ENCODE measurements at regions of chr9 and their contacts with region 1.

Region 1: DNA sequence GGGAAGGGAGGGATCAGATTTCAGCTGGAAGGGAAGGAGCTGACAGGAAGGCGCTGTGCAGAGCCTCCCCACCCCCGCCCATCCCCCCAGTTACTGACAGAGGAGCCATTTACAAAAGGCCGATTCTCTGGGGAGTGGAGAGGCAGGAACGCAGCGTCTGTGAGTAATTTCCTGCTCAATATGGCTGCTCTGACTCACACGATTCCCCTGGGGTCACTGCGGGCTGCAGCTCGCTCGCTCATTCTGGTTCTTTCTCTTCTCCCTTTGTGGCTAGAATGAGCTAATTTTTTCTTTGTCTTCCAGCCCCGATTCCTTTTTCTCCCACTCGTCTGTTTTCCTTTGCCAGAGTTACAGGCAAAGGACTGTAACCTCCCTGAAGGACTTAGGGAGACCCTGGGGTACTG is 28.8 kb downstream of the PTPA start:
- DNase-seq: peak; percentile 95
- ATAC-seq: peak; percentile 83
- H3K4me3 ChIP-seq: peak overlapping the region; percentile 43 to 64 (median 57)
- H3K4me3 Mint-ChIP-seq: peak overlapping the region; percentile 90
- H3K27ac ChIP-seq: peak overlapping the region; percentile 97 to 100
- H3K27ac Mint-ChIP-seq: peak overlapping the region; percentile 94
- H3K4me1 ChIP-seq: peaks cover 43 to 50% of the 10 kb centered on the region in 2 donors
- H3K4me1 Mint-ChIP-seq: peaks cover 47% of the 10 kb centered on the region
- H3K27me3 ChIP-seq: no peaks in the 10 kb centered on the region
- H3K27me3 Mint-ChIP-seq: no peaks in the 10 kb centered on the region
- CTCF ChIP-seq: no peak

Region 2: DNA sequence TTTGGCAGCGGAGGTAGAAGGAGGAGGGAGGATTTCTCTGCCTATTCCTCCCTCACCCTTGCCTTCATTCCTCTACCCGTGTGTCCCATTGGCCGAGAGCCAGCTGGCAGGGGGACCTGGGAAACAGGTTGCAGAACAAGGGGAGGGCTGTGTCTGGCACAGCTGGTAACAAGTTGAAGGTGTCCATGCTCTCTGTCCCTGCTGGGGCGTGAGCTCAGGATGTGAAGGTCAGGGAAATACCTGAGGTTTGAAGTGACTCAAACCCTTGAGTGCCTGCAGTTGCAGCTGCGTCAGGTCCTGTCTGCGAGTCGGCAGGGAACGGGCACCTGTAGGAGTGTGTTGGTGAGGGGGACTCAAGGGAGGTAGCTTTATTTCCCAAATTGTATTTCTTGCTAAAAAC is 87.4 kb before region 1 on chr9:
- CTCF ChIA-PET with region 1: no interaction called
- POLR2A ChIA-PET with region 1: no interaction called
- intact Hi-C with region 1: no loop called
- DNase-seq: no peak
- ATAC-seq: no peak
- H3K4me3 ChIP-seq: no peak overlapping the region
- H3K4me3 Mint-ChIP-seq: no peak overlapping the region
- H3K27ac ChIP-seq: no peak overlapping the region
- H3K27ac Mint-ChIP-seq: no peak overlapping the region
- H3K4me1 ChIP-seq: no peaks in the 10 kb centered on the region
- H3K4me1 Mint-ChIP-seq: no peaks in the 10 kb centered on the region
- H3K27me3 ChIP-seq: no peaks in the 10 kb centered on the region
- H3K27me3 Mint-ChIP-seq: no peaks in the 10 kb centered on the region
- CTCF ChIP-seq: no peak

Region 3: DNA sequence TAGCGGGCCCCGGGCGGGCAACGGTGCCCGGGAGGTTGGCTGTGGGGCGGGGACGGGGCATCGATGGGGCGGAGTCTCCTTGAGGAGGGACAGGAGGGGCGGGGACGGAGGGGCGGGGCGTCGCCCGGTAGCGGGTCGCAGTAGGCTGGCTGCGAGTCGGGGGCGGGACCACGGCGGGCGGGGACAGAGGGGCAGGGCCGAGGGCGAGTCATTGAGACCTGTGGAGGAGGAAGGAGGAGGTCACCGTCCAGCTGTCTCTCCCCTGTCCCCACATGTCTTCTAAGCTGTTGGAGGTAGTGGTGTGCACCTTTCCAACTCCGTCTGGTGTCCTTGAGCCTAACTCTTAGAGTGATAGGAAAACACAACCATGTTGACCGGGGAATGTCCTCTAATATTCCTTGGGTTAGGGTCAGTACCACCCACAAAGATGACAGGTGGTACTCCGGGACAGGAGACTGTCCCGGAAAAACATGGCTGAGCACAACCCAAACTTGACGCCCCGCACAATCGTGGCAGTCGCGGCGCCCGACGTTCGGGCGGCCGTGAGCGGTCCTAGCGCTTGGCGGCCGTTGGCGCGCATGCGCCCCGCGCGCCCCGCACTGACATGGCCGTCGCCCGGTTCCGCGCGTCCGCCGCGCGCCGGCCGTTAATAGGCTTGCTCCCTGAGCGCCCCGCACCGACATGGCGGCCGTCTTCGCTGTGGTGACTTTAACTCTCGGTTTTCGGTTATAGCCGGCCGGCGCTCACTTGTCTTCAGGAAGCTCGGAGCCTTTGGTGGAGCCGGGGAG is 29.1 kb before region 1 on chr9 and contains the starts of genes CRAT and PTPA:
- CTCF ChIA-PET with region 1: interaction called, 18 read pairs
- POLR2A ChIA-PET with region 1: interaction called, 4 read pairs
- intact Hi-C with region 1: loop called (anchors 1 kb)
- DNase-seq: peak; percentile 96
- ATAC-seq: peak; percentile 88
- H3K4me3 ChIP-seq: peak within 1 kb of the TSS; percentile 92 to 98 (median 95)
- H3K4me3 Mint-ChIP-seq: peak within 1 kb of the TSS; percentile 96
- H3K27ac ChIP-seq: peak within 1 kb of the TSS; percentile 81 to 85
- H3K27ac Mint-ChIP-seq: peak within 1 kb of the TSS; percentile 96
- H3K4me1 ChIP-seq: peaks cover 12 to 19% of the 10 kb centered on the region in 2 donors
- H3K4me1 Mint-ChIP-seq: peaks cover 25% of the 10 kb centered on the region
- H3K27me3 ChIP-seq: no peaks in the 10 kb centered on the region
- H3K27me3 Mint-ChIP-seq: no peaks in the 10 kb centered on the region
- CTCF ChIP-seq: no peak
- total RNA-seq, gene CRAT: 11.8 and 14.1 TPM in 2 replicates
- total RNA-seq, gene PTPA: 72.8 and 73.9 TPM in 2 replicates

Region 4: DNA sequence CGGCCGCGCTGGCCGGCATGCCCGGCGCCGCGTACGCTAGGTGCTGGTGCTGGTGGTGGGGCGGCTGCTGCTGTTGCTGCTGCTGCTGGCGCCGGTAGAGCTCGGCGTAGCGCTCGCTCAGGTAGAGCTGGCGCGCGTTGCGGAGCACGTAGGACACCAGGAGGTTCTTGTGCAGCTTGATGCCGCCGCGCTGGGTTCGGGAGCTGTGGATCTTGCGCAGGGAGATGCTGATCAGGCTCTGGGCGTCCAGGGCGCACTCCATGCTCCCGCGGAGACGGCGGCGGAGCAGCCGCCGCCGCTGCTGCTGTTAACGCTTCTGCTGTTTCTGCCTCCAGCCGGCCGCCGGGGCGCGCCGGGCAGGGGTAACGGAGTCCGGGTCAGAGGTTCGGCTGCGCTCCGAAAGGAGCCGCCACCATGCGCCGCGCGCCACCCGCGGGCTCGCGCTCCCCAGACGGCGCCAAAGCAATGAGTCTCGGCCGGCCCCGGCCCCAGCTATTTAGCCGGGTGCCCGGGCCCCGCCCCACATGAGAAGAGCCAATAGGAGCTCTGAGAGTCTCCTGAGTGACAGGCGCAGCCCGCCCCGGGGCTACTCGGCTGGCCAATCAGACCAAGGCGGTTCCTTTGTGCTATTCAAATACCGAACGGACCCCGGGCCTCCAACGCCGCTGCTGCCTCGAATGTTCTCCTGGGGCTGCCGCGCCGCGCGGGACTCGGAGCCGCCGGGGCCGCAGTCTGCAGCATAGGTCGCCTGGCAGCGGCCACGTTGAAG is 38.0 kb after region 1 on chr9 and contains the start of gene IER5L:
- CTCF ChIA-PET with region 1: interaction called, 382 read pairs
- POLR2A ChIA-PET with region 1: interaction called, 15 read pairs
- intact Hi-C with region 1: loop called (anchors 1 kb)
- DNase-seq: peak; percentile 95
- ATAC-seq: peak; percentile 87
- H3K4me3 ChIP-seq: peak within 1 kb of the TSS; percentile 48 to 94 (median 69)
- H3K4me3 Mint-ChIP-seq: peak within 1 kb of the TSS; percentile 93
- H3K27ac ChIP-seq: no peak within 1 kb of the TSS
- H3K27ac Mint-ChIP-seq: peak within 1 kb of the TSS; percentile 74
- H3K4me1 ChIP-seq: peaks cover 22 to 34% of the 10 kb centered on the region in 2 donors
- H3K4me1 Mint-ChIP-seq: peaks cover 22% of the 10 kb centered on the region
- H3K27me3 ChIP-seq: peaks cover 0 to 27% (median 15%) of the 10 kb centered on the region in 4 experiments
- H3K27me3 Mint-ChIP-seq: peaks cover 14% of the 10 kb centered on the region
- CTCF ChIP-seq: no peak
- total RNA-seq, gene IER5L: 12.9 and 13.2 TPM in 2 replicates

Region 5: GRCh38 chr9:129413537-129414376 is 273.8 kb after region 1 on chr9:
- CTCF ChIA-PET with region 1: interaction called, 9 read pairs
- POLR2A ChIA-PET with region 1: interaction called, 3 read pairs
- intact Hi-C with region 1: loop called (anchors 1 kb)
- DNase-seq: peak; percentile 99
- ATAC-seq: peak; percentile 71
- H3K4me3 ChIP-seq: peak overlapping the region in 4 of 5 experiments; percentile 75 to 79 (median 77)
- H3K4me3 Mint-ChIP-seq: peak overlapping the region; percentile 91
- H3K27ac ChIP-seq: peak overlapping the region; percentile 99
- H3K27ac Mint-ChIP-seq: peak overlapping the region; percentile 100
- H3K4me1 ChIP-seq: peaks cover 18 to 25% of the 10 kb centered on the region in 2 donors
- H3K4me1 Mint-ChIP-seq: peaks cover 25% of the 10 kb centered on the region
- H3K27me3 ChIP-seq: no peaks in the 10 kb centered on the region
- H3K27me3 Mint-ChIP-seq: no peaks in the 10 kb centered on the region
- CTCF ChIP-seq: no peak

Region 6: DNA sequence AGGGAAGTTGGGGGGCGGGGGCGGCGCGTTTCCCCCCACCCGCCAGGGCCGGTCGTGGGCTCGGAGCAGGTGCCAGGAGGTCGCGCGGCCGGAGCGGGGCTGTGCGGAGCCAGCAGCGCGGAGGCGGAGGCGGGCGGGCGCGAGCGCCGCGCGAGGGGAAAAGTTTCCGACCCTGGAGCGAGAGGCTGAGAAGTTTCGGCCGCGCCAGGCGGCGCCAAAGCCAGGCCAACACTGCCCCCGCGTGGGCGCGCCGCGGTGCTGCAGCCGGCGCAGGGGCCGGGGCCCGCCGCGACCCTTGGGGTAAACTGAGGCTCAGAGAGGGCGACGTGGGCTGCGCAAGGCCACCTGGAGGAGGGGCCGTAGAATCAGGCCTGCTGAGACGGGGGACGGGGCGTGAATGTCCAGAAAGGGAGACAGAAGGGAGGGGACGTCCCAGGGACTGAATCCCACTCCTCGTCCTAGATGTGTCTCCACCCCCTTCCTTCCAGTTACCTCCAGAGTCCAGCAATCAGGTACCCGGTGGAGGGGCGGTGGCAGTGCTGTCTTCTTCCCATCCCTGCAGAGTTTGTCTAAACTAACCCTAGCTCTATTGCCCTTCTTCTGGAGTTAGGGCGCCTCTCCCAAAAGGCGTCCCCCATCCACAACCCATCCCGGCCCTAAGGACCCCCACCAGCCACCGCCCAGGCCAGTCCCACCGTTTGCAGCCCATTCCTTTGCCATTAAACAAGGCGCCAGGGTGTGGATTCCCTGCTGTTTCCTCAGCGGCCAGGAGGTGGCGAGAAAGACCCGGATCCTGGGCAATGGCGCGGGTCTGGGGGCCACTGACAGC is 470.7 kb after region 1 on chr9:
- CTCF ChIA-PET with region 1: interaction called, 69 read pairs
- POLR2A ChIA-PET with region 1: interaction called, 10 read pairs
- intact Hi-C with region 1: no loop called
- DNase-seq: peak; percentile 81
- ATAC-seq: peak; percentile 77
- H3K4me3 ChIP-seq: peak overlapping the region; percentile 21 to 86 (median 59)
- H3K4me3 Mint-ChIP-seq: peak overlapping the region; percentile 79
- H3K27ac ChIP-seq: peak overlapping the region in 1 of 2 donors; percentile 39
- H3K27ac Mint-ChIP-seq: peak overlapping the region; percentile 61
- H3K4me1 ChIP-seq: peaks cover 19 to 21% of the 10 kb centered on the region in 2 donors
- H3K4me1 Mint-ChIP-seq: peaks cover 22% of the 10 kb centered on the region
- H3K27me3 ChIP-seq: peaks cover 0 to 13% (median 0%) of the 10 kb centered on the region in 4 experiments
- H3K27me3 Mint-ChIP-seq: no peaks in the 10 kb centered on the region
- CTCF ChIP-seq: peak; percentile 94

Region 7: DNA sequence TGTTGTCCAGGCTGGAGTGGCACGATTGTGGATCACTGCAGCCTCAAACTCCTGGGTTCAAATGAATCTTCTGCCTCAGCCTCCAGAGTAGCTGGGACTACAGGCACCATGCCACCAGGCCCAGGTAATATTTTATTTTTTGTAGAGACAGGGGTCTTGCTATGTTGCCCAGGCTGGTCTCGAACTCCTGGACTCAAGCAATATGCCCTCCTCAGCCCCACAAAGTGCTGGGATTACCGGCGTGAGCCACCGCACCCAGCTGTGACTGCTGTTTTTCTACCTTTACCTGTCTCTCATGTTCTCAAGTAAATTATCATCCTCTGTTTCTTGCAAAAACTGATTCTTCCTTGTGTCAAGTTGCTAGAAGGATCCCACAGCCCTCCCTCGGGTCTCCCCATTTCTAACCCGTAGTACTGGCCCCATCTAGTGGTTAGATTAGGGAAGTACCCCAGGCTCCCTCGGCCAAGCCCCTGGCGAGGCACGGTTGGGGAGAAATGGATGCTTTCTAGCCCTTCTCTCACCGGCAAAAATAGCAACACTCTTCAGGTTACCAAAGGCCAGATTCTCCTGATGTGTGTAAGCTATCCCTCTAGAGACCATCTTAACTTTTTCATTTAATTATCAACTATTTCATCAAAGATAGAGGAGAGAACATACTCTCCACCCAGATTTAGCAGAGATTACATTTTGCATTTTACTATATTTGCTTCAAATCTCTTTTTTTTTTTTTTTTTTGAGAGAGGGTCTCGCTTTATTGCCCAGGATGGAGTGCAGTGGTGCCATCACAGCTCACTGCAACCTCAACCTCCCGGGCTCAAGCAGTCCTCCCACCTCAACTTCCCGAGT is 643.7 kb after region 1 on chr9:
- CTCF ChIA-PET with region 1: interaction called, 14 read pairs
- POLR2A ChIA-PET with region 1: interaction called, 4 read pairs
- intact Hi-C with region 1: no loop called
- DNase-seq: peak; percentile 81
- ATAC-seq: peak; percentile 99
- H3K4me3 ChIP-seq: no peak overlapping the region
- H3K4me3 Mint-ChIP-seq: no peak overlapping the region
- H3K27ac ChIP-seq: no peak overlapping the region
- H3K27ac Mint-ChIP-seq: no peak overlapping the region
- H3K4me1 ChIP-seq: no peaks in the 10 kb centered on the region
- H3K4me1 Mint-ChIP-seq: no peaks in the 10 kb centered on the region
- H3K27me3 ChIP-seq: peaks cover 0 to 19% (median 1%) of the 10 kb centered on the region in 4 experiments
- H3K27me3 Mint-ChIP-seq: peaks cover 19% of the 10 kb centered on the region
- CTCF ChIP-seq: peak; percentile 89